ENCODE measurements at regions of chr7 and their contacts with region 1.

Region 1: DNA sequence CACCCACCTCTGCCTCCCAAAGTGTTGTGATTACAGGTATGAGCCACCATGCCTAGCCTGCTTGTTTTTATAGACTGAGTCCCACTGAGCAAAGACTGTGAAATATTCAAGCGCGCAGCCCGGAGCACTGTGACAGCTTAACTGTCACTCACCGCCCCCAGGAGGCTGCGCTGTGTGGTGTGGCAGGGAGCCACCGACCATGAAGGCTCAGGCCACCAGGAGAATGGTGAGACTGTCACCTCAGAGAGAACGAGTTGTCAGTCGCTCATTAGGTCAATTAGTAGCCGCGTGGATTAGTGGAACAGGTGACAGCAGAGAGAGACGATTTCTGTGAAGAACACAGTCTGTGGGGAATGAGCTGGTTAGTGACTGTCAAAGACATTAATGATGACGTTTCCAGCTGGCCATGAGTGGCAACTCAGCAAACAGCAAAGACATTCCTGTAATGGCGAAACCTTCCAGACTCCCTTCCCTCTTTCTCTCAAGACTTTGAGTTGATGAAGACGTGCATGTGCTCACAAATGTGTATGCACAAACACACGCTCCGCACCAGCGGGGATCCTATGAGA is 64.5 kb downstream of the CYCS start:
- DNase-seq: no peak
- ATAC-seq: no peak
- H3K4me3 ChIP-seq: no peak overlapping the region
- H3K27ac ChIP-seq: no peak overlapping the region
- H3K4me1 ChIP-seq: no peaks in the 10 kb centered on the region
- H3K27me3 ChIP-seq: no peaks in the 10 kb centered on the region; a peak in 1 of 4 replicates
- CTCF ChIP-seq: no peak
- EP300 ChIP-seq: no peak
- POLR2A ChIP-seq: no peak
- RAD21 ChIP-seq: no peak

Region 2: DNA sequence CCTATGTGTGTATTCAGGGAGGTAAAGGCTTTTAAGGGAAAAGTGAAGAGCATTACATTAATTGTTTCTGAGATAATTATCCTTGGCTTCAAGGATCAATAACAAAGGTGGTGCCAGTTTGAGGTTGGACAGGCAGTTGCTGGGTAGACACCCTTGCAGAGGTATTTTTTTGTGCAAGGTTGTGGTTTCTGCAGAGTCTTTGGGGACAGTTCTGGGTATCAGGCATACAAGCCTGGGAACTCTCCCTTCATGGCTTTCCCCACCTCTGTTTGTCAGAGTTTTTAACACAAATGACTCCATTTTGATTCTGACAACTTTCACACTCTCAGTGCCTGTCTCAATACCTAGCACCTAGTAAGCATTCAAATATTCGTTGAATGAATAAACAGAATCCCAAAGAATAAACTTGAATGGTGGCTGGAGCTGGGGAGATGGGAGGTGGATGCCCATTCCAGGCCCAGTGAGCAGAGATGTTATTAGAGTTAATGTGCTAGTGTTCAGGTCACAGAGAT is 73.2 kb before region 1 on chr7:
- CTCF ChIA-PET with region 1: interaction called, 4 read pairs
- POLR2A ChIA-PET with region 1: no interaction called
- RAD21 ChIA-PET with region 1: interaction called, 5 read pairs
- SMC1A ChIA-PET with region 1: interaction called, 3 read pairs
- in situ Hi-C with region 1: loop called (anchors 5 kb)
- intact Hi-C with region 1: no loop called
- DNase-seq: no peak
- ATAC-seq: peak; percentile 68
- H3K4me3 ChIP-seq: no peak overlapping the region
- H3K27ac ChIP-seq: no peak overlapping the region
- H3K4me1 ChIP-seq: no peaks in the 10 kb centered on the region; the same call in 1 of the 2 replicates
- H3K27me3 ChIP-seq: no peaks in the 10 kb centered on the region
- CTCF ChIP-seq: no peak
- EP300 ChIP-seq: no peak
- POLR2A ChIP-seq: no peak
- RAD21 ChIP-seq: no peak